CD4-positive, alpha-beta memory T cell (primary cell): ENCODE measurements at regions of chr10 and their contacts with region 1.

Region 1: DNA sequence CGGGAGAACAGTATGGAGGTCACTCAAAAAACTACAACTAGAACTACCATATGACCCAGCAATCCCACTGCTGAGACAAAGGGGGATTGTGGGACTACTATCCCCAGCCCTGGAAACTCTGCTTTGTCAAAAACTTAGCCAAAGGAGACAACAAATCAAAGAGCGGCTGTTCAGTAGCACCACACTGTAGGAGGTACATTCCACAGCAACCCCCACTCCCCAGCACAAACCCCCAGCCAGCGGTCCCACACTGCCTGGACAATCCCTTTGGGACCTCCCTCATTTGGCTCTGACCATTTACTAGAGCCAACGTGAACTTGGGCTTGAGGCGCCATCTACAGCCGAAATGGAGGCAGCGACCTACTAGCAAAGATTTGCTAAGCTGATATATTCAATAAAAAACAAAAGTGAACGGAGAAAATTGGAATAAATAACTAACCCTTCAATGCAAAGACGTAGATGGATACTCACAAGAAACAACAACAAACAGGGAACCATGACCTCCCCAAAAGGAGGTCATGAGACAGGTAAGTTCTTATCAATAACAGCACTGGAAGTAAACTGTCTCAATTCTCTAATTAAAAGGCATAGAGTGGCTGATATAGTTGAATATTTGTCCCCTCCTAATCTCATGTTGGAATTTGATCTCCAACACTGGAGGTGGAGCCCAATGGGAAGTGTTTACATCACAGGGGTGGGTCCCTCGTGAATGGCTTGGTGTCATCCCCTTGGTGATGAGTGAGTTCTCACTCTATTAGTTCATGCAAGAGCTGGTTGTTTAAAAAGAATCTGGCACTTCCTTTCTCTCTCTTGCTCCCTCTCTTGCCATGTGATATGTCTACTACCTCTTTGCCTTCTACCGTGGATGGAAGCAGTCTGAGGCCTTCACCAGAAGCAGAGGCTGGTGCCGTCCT is 119.0 kb upstream of the KCNMA1 start:
- DNase-seq: no peak
- H3K4me3 ChIP-seq: no peak overlapping the region
- H3K4me3 Mint-ChIP-seq: no peak overlapping the region
- H3K27ac ChIP-seq: no peak overlapping the region
- H3K27ac Mint-ChIP-seq: no peak overlapping the region
- H3K4me1 ChIP-seq: no peaks in the 10 kb centered on the region
- H3K4me1 Mint-ChIP-seq: no peaks in the 10 kb centered on the region
- H3K27me3 ChIP-seq: no peaks in the 10 kb centered on the region
- H3K27me3 Mint-ChIP-seq: peaks cover 0 to 6% of the 10 kb centered on the region in 2 donors

Region 2: DNA sequence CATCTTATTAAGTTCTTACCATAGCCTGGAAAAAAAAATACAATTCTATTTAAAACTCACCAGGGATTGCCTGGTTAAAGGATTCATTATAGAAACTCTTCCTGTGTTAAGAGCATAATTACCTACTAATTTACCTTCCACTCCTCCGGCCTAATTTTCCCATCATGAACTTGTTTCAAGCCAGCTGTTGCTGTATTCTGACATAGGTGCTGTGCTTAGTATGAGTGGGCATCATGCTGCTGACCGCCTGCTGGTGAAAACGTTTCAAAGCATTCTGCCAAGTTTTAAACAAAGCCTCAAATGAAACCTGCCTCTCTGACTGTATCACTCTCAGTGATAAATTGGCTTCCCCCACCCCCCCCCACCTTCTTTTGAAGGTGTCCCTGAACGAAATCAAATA is 71.1 kb before region 1 on chr10:
- CTCF ChIA-PET with region 1: no interaction called
- POLR2A ChIA-PET with region 1: no interaction called
- intact Hi-C with region 1: no loop called
- DNase-seq: no peak
- H3K4me3 ChIP-seq: no peak overlapping the region
- H3K4me3 Mint-ChIP-seq: no peak overlapping the region
- H3K27ac ChIP-seq: no peak overlapping the region
- H3K27ac Mint-ChIP-seq: no peak overlapping the region
- H3K4me1 ChIP-seq: no peaks in the 10 kb centered on the region
- H3K4me1 Mint-ChIP-seq: no peaks in the 10 kb centered on the region
- H3K27me3 ChIP-seq: no peaks in the 10 kb centered on the region
- H3K27me3 Mint-ChIP-seq: peaks cover 7 to 10% of the 10 kb centered on the region in 2 donors

Region 3: GRCh38 chr10:77718957-77719356 is 37.6 kb before region 1 on chr10:
- CTCF ChIA-PET with region 1: interaction called, 3 read pairs
- POLR2A ChIA-PET with region 1: interaction called, 3 read pairs
- intact Hi-C with region 1: loop called (anchors 2 kb)
- DNase-seq: no peak
- H3K4me3 ChIP-seq: no peak overlapping the region
- H3K4me3 Mint-ChIP-seq: no peak overlapping the region
- H3K27ac ChIP-seq: no peak overlapping the region
- H3K27ac Mint-ChIP-seq: no peak overlapping the region
- H3K4me1 ChIP-seq: no peaks in the 10 kb centered on the region
- H3K4me1 Mint-ChIP-seq: peaks cover 0 to 4% (median 0%) of the 10 kb centered on the region in 4 donors
- H3K27me3 ChIP-seq: no peaks in the 10 kb centered on the region
- H3K27me3 Mint-ChIP-seq: peaks cover 0 to 4% of the 10 kb centered on the region in 2 donors